HEK293 (cell line): ENCODE measurements at regions of chr16 and their contacts with region 1.

Region 1: DNA sequence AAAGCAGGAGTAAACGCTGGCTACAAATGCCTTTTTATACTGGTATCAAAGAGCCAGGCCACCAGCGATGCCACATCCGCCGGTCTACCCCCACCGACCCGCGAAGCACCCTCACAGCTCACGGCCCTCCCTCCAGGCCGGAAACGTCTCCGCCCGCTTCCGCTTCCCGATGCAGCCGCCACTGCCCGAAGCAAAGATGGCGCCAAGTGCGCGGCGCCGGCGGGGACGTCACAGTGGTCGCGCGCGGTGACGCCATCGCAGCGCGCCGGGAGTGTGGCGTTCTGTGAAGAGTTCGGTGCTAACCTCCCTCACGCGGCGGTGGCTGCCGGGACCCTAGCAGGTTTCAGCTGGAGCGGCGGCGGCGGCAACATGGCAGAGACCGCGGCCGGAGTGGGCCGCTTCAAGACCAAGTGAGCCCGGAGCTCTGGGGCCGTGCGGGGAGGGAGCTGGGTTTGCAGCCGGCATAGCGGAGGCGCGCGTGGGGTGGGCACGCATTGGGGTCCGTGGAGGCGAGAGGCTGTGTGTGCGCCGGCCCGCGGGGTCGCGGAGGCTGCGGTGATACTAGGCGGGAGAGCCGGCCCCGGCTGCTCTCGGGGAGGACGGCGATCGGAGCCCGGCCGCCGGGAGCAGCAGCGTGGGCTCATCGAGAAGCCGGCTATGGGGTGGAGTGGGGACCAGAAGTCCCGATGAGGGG is at the start of gene TBL3:
- H3K4me3 ChIP-seq: peak within 1 kb of the TSS; percentile 97
- H3K27ac ChIP-seq: peak within 1 kb of the TSS; percentile 88
- H3K4me1 ChIP-seq: no peaks in the 10 kb centered on the region
- CTCF ChIP-seq: peak; percentile 30

Region 2: GRCh38 chr16:1929578-1930337 is 42.2 kb before region 1 on chr16:
- CTCF ChIA-PET with region 1: no interaction called
- POLR2A ChIA-PET with region 1: no interaction called
- H3K4me3 ChIP-seq: peak overlapping the region; percentile 44
- H3K27ac ChIP-seq: peak overlapping the region; percentile 16; the same call in 1 of the 2 replicates
- H3K4me1 ChIP-seq: no peaks in the 10 kb centered on the region
- CTCF ChIP-seq: peak; percentile 59; the same call in 1 of the 2 replicates

Region 3: GRCh38 chr16:1959269-1960049 is 12.5 kb before region 1 on chr16 and contains the start of gene NDUFB10:
- CTCF ChIA-PET with region 1: interaction called, 4 read pairs
- POLR2A ChIA-PET with region 1: interaction called, 76 read pairs
- H3K4me3 ChIP-seq: peak within 1 kb of the TSS; percentile 94
- H3K27ac ChIP-seq: peak within 1 kb of the TSS; percentile 96
- H3K4me1 ChIP-seq: no peaks in the 10 kb centered on the region; the same call in 1 of the 2 replicates
- CTCF ChIP-seq: peak; percentile 80

Region 4: GRCh38 chr16:1983544-1984346 is 11.8 kb after region 1 on chr16 and contains the start of gene GFER:
- CTCF ChIA-PET with region 1: interaction called, 6 read pairs
- POLR2A ChIA-PET with region 1: interaction called, 14 read pairs
- H3K4me3 ChIP-seq: peak within 1 kb of the TSS; percentile 73
- H3K27ac ChIP-seq: peak within 1 kb of the TSS; percentile 83
- H3K4me1 ChIP-seq: peaks cover 7% of the 10 kb centered on the region; the same call in 1 of the 2 replicates
- CTCF ChIP-seq: peak; percentile 91